Endothelial cell of umbilical vein (primary cell): ENCODE measurements at regions of chr1 and their contacts with region 1.

Region 1: GRCh38 chr1:15760520-15761211 is 2.1 kb downstream of the FBLIM1 start:
- DNase-seq: peak; percentile 86
- H3K4me3 ChIP-seq: peak overlapping the region; percentile 92 to 99 (median 97)
- H3K27ac ChIP-seq: peak overlapping the region; percentile 81
- H3K4me1 ChIP-seq: peaks cover 62% of the 10 kb centered on the region
- H3K27me3 ChIP-seq: no peaks in the 10 kb centered on the region
- CTCF ChIP-seq: no peak
- POLR2A ChIP-seq: peak; percentile 78

Region 2: GRCh38 chr1:15617175-15617880 is 143.3 kb before region 1 on chr1 and contains the start of gene DDI2:
- CTCF ChIA-PET with region 1: no interaction called
- POLR2A ChIA-PET with region 1: no interaction called
- dilution Hi-C with region 1: no loop called
- intact Hi-C with region 1: loop called (anchors 1 kb)
- DNase-seq: peak; percentile 98
- H3K4me3 ChIP-seq: peak within 1 kb of the TSS; percentile 54 to 87 (median 75)
- H3K27ac ChIP-seq: peak within 1 kb of the TSS; percentile 56
- H3K4me1 ChIP-seq: peaks cover 27% of the 10 kb centered on the region
- H3K27me3 ChIP-seq: no peaks in the 10 kb centered on the region
- CTCF ChIP-seq: no peak
- POLR2A ChIP-seq: peak; percentile 64
- total RNA-seq, gene DDI2: 35.2 and 35.9 TPM in 2 replicates

Region 3: GRCh38 chr1:15741183-15741850 is 19.3 kb before region 1 on chr1:
- CTCF ChIA-PET with region 1: interaction called, 31 read pairs
- POLR2A ChIA-PET with region 1: interaction called, 8 read pairs
- dilution Hi-C with region 1: no loop called
- intact Hi-C with region 1: no loop called
- DNase-seq: peak; percentile 49
- H3K4me3 ChIP-seq: no peak overlapping the region
- H3K27ac ChIP-seq: no peak overlapping the region
- H3K4me1 ChIP-seq: no peaks in the 10 kb centered on the region
- H3K27me3 ChIP-seq: no peaks in the 10 kb centered on the region
- CTCF ChIP-seq: peak; percentile 72 to 80
- POLR2A ChIP-seq: no peak

Region 4: DNA sequence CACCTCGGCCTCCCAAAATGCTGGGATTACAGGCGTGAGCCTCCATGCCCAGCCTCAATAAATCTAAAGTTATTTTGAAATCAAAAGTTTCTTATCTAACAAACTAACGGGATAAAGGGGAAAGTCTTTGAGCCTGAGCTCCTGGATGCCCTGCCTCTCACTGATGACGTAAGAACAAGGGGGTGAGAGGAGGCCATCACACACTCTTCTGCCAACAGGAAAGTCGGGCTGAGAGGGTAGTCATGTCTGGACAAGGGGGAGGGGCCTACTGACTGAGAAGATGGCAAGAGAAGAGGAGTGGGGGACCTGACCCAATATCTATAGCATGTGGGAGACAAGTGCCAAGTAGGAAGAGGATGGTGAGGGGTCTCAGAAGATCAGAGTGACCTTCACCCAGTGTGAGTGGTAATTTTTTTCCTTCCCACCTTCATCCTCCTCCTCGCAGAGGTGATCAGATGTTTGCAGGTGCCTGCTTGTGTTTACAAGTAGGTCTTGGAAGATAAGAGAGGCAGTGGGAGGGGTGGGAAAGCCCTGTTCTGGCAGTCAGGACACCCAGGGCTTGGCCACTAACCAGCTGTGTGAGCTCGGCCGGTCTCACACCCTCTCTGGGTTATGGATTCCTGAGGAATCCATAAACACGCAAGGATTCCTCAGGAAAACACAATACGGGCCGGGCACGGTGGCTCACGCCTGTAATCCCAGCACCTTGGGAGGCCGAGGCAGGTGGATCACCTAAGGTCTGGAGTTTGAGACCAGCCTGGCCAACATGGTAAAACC is 37.1 kb after region 1 on chr1:
- CTCF ChIA-PET with region 1: interaction called, 3 read pairs
- POLR2A ChIA-PET with region 1: interaction called, 12 read pairs
- dilution Hi-C with region 1: no loop called
- intact Hi-C with region 1: no loop called
- DNase-seq: peak; percentile 30
- H3K4me3 ChIP-seq: no peak overlapping the region
- H3K27ac ChIP-seq: peak overlapping the region; percentile 88
- H3K4me1 ChIP-seq: peaks cover 56% of the 10 kb centered on the region
- H3K27me3 ChIP-seq: no peaks in the 10 kb centered on the region
- CTCF ChIP-seq: no peak
- POLR2A ChIP-seq: no peak

Region 5: DNA sequence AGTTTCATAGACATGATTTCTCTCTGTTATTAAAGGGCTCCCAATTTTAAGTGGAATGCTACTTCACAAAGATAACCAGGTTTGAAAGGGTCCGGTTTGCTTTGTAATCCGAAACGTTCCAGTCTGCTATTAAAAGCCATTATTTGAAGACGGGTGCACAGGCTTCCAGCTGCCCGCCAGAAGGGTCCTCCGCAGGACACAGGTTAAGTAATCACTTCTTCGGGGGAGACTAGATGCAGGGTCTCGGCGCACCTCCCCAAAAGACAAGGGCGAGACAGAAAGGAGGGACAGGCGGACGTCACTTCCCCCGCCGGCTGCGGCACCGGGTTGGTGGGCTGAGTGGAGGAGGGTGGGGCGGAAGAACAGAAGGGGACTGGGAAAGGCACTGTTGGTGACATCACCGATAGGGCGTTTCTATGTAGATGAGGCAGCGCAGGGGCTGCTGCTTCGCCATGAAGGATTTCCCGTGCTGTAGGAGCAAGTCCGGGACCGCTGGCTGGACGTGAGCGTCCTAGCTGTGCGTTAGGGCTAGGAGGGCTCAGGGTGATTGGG is 1144.0 kb after region 1 on chr1:
- CTCF ChIA-PET with region 1: no interaction called
- POLR2A ChIA-PET with region 1: interaction called, 10 read pairs
- dilution Hi-C with region 1: no loop called
- intact Hi-C with region 1: no loop called
- DNase-seq: peak; percentile 99
- H3K4me3 ChIP-seq: peak overlapping the region; percentile 29 to 67 (median 34)
- H3K27ac ChIP-seq: peak overlapping the region; percentile 92
- H3K4me1 ChIP-seq: peaks cover 19% of the 10 kb centered on the region
- H3K27me3 ChIP-seq: no peaks in the 10 kb centered on the region
- CTCF ChIP-seq: no peak
- POLR2A ChIP-seq: no peak